Naive thymus-derived CD8-positive, alpha-beta T cell (primary cell): ENCODE measurements at regions of chr1 and their contacts with region 1.

Region 1: GRCh38 chr1:204494281-204495077 is at the start of gene PIK3C2B:
- DNase-seq: peak; percentile 53 to 82 (median 66)
- ATAC-seq: peak; percentile 75 to 76
- H3K4me3 Mint-ChIP-seq: peak within 1 kb of the TSS; percentile 91 to 97 (median 94)
- H3K27ac Mint-ChIP-seq: peak within 1 kb of the TSS; percentile 92 to 98 (median 95)
- H3K4me1 Mint-ChIP-seq: peaks cover 33 to 75% (median 67%) of the 10 kb centered on the region in 4 donors
- H3K27me3 Mint-ChIP-seq: no peaks in the 10 kb centered on the region
- polyA plus RNA-seq, gene PIK3C2B: 1.3 to 2.6 (median 1.8) TPM

Region 2: GRCh38 chr1:204411451-204412204 is 82.9 kb before region 1 on chr1 and contains the start of gene PPP1R15B:
- POLR2A ChIA-PET with region 1: interaction called, 10 read pairs
- DNase-seq: peak; percentile 93 to 99 (median 97)
- ATAC-seq: peak; percentile 88 to 89
- H3K4me3 Mint-ChIP-seq: peak within 1 kb of the TSS; percentile 97 to 100 (median 98)
- H3K27ac Mint-ChIP-seq: peak within 1 kb of the TSS; percentile 98 to 100 (median 99)
- H3K4me1 Mint-ChIP-seq: peaks cover 1 to 22% (median 10%) of the 10 kb centered on the region in 4 donors
- H3K27me3 Mint-ChIP-seq: no peaks in the 10 kb centered on the region
- polyA plus RNA-seq, gene PPP1R15B: 14.2 to 20.8 (median 17.7) TPM

Region 3: DNA sequence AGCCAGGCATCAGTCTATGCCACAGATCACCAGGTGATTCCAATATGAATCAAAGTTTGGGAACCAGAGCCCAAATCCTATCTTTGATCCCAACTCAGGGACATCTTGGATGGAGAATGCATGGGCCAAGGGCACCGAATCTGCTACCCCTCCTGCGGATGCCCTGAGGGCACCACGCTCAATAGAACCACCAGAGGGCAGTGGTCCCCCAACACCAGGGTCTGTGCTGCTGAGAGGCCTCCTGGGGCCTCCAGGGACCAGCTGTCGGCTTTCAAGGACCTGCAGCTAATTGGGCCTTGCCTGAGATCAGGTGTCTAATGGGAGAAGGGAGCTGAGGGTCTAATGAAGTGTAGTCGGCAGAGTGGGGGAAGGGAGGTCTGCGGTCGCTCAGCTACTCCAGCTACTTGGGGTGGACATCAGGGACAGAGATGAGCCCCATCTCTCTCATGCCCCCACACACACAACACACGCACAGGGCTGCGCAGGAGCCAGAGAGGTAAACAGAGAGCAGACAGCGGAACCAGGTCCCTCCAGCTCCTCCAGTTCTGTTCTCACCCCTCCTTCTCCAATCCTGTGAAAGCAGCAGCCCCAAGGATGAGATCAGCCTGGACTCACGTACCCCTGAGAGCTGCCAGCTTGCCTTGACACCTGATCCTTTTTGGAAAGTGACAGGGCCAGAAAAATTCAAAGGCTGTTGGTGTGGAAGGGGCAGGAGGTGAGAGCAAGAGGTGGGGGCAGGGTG is 47.9 kb before region 1 on chr1:
- POLR2A ChIA-PET with region 1: interaction called, 22 read pairs
- DNase-seq: peak; percentile 64 to 88 (median 74)
- ATAC-seq: peak; percentile 99 to 100
- H3K4me3 Mint-ChIP-seq: peak overlapping the region in 2 of 10 donors; percentile 53 to 66
- H3K27ac Mint-ChIP-seq: peak overlapping the region; percentile 73 to 97 (median 90)
- H3K4me1 Mint-ChIP-seq: peaks cover 7 to 42% (median 10%) of the 10 kb centered on the region in 4 donors
- H3K27me3 Mint-ChIP-seq: no peaks in the 10 kb centered on the region

Region 4: DNA sequence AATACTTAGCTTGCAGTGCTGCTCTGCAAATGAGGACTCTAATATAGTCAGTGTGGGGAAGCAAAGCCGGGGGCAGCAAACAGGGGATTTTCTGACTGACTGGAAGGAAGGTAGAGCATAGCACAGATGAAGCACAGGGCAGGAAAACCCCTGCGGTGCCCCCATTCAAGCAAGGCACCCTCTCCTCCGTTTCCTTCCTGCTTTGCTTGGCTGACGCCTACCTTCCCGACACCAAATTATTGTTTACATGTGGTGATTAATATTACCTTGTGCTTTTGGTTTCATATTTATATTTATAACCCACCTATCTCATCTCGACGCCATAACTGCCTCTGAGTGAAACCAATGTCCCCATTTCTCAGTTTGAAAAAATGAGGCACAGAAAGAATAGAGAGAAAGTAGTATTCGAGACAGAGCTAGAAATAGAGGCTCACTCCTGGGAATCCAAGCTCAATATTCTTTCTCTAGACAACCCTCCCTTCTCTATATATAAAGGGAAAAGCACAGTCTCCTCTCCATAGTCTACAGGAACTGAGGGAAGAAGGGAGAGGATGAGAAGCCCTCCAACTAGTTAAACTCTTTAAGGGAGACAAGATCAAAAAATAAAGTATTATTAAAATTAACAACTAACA is 41.2 kb before region 1 on chr1:
- POLR2A ChIA-PET with region 1: interaction called, 23 read pairs
- DNase-seq: peak; percentile 53 to 88 (median 79)
- ATAC-seq: peak; percentile 98 to 99
- H3K4me3 Mint-ChIP-seq: peak overlapping the region; percentile 29 to 80 (median 67)
- H3K27ac Mint-ChIP-seq: peak overlapping the region; percentile 88 to 98 (median 91)
- H3K4me1 Mint-ChIP-seq: peaks cover 10 to 50% (median 21%) of the 10 kb centered on the region in 4 donors
- H3K27me3 Mint-ChIP-seq: no peaks in the 10 kb centered on the region

Region 5: DNA sequence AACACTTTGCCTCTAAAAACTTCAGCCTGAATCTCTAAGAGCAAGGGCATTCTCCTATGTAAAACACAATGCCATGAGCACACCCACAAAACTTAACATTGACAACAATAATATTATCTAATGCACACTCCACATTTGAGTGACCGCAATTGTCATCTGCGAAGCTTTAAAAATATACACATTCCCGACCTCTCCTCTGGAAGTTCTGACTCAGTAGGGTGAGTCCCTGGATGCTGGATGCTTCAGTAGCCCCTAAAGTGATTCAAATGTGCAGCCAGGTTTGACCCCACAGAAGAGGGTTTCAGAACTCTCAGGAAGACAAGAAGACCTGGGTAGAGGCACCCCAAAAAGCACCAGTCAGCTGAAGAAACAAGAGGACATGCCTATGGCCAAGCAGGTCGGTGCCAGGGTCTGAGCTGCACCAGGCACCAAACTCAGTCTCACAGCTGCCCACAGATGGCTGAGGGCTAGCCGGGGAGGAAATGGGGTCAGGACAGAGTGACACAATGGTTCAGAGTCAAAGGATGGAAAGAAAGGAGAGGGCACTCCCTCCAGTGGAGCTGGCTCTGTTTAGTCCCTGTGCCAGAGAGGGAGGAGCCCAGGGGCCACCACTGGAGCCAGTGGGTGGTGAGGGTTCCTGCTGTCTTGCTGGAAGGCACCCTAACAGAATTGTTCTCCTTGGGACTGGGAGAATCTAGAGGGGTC is 17.3 kb before region 1 on chr1:
- POLR2A ChIA-PET with region 1: interaction called, 11 read pairs
- DNase-seq: no peak
- ATAC-seq: no peak
- H3K4me3 Mint-ChIP-seq: no peak overlapping the region
- H3K27ac Mint-ChIP-seq: peak overlapping the region in 6 of 10 donors; percentile 3 to 67 (median 10)
- H3K4me1 Mint-ChIP-seq: peaks cover 47 to 92% (median 80%) of the 10 kb centered on the region in 4 donors
- H3K27me3 Mint-ChIP-seq: no peaks in the 10 kb centered on the region

Region 6: GRCh38 chr1:204506961-204507387 is 12.5 kb after region 1 on chr1:
- POLR2A ChIA-PET with region 1: interaction called, 85 read pairs
- DNase-seq: peak; percentile 52 to 97 (median 92)
- ATAC-seq: peak; percentile 73 to 77
- H3K4me3 Mint-ChIP-seq: peak overlapping the region; percentile 78 to 98 (median 93)
- H3K27ac Mint-ChIP-seq: peak overlapping the region; percentile 88 to 100 (median 99)
- H3K4me1 Mint-ChIP-seq: peaks cover 22 to 53% (median 40%) of the 10 kb centered on the region in 4 donors
- H3K27me3 Mint-ChIP-seq: peaks cover 0 to 7% (median 0%) of the 10 kb centered on the region in 5 donors

Region 7: DNA sequence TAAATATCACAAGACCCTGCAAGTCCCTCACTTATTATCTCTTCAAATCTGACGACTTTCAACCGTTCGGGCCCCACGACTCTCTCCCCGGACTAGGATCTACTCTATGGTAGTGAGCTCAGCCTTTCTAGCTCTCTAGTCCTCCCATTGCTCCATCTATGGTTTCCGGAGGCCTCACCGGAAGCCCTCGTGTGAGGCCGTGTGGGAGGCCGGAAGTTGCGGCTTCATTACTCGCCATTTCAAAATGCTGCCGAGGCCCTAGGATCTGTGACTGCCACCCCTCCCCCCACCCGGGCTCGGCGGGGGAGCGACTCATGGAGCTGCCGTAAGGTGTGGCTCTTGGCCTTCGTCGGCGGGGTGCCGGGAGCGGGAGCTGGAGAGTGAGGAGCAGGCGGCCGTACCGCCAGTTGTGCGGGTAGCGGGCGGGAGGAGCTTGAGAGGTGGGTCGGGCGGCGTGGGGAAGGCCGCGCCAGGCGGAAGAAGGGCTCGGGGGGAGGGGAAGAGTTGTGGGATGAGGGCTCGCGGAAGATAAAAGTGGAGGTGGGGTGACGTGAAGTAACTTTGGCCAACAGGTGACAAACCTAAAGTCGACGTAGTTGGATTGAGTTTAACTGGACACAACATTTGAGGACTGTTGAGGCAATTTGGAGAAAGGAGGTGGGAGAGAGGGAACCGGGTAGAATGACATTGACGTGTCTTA is 21.9 kb after region 1 on chr1 and contains the start of gene MDM4:
- POLR2A ChIA-PET with region 1: interaction called, 30 read pairs
- DNase-seq: peak; percentile 75 to 96 (median 92)
- ATAC-seq: peak; percentile 71 to 78
- H3K4me3 Mint-ChIP-seq: no peak within 1 kb of the TSS
- H3K27ac Mint-ChIP-seq: peak within 1 kb of the TSS in 4 of 10 donors; percentile 21 to 99 (median 76)
- H3K4me1 Mint-ChIP-seq: peaks cover 19 to 74% (median 62%) of the 10 kb centered on the region in 4 donors
- H3K27me3 Mint-ChIP-seq: no peaks in the 10 kb centered on the region
- polyA plus RNA-seq, gene MDM4: 10.0 to 23.1 (median 10.7) TPM

Region 8: GRCh38 chr1:204591594-204592051 is 97.1 kb after region 1 on chr1:
- POLR2A ChIA-PET with region 1: no interaction called
- DNase-seq: no peak
- ATAC-seq: no peak
- H3K4me3 Mint-ChIP-seq: no peak overlapping the region
- H3K27ac Mint-ChIP-seq: no peak overlapping the region
- H3K4me1 Mint-ChIP-seq: no peaks in the 10 kb centered on the region
- H3K27me3 Mint-ChIP-seq: no peaks in the 10 kb centered on the region

Region 9: DNA sequence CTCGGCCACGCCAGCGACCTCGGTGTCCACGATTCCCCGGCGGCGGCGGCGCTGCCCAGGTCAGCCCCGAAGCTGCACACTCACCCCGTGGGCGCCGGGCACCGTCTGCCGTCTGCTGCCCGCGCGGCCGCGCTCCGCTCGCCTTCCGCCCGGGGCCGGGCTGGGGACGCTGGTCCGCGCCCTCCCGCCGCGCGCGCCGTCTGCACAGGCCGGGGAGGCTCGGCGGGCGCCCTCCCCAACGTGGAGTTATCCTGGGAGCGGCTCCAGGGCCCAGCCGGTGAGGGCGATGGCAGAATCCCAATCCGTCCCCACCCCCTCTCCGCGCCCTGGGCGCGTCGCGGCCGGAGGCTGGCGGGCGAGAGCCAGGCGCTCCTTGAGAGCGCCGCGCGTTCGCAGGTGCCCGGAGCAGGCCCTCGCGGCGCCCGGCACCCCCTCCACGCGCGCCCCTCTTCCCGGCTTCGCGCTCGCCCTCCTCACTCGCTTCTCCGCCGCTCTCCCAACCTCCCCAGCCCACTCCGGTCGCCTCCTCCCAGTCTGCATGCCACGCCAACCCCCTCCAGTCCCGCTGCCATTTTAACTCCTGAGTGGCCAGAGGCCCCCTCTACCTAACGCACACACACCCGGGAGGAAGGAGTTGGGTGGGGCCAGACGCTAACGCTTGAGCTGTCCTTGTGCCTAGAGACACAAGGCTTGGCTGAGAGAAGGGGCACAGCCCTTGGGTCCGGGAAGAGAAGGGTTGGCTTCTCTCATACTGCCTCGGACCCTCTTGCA is 190.9 kb after region 1 on chr1 and contains the start of gene LRRN2:
- POLR2A ChIA-PET with region 1: no interaction called
- DNase-seq: no peak
- ATAC-seq: no peak
- H3K4me3 Mint-ChIP-seq: peak within 1 kb of the TSS; percentile 50 to 84 (median 66)
- H3K27ac Mint-ChIP-seq: no peak within 1 kb of the TSS
- H3K4me1 Mint-ChIP-seq: peaks cover 8 to 17% (median 13%) of the 10 kb centered on the region in 4 donors
- H3K27me3 Mint-ChIP-seq: peaks cover 12 to 43% (median 31%) of the 10 kb centered on the region in 5 donors
- polyA plus RNA-seq, gene LRRN2: 0.03 TPM in 1 of 3 donors, not detected in the others